Caco-2 (cell line): ENCODE measurements at regions of chr11 and their contacts with region 1.

Region 1: GRCh38 chr11:64652586-64653387 is 61.8 kb downstream of the SLC22A12 start:
- DNase-seq: peak; percentile 86 to 93
- H3K4me3 ChIP-seq: no peak overlapping the region
- H3K4me3 Mint-ChIP-seq: no peak overlapping the region
- H3K27ac Mint-ChIP-seq: no peak overlapping the region
- H3K4me1 ChIP-seq: peaks cover 17% of the 10 kb centered on the region
- H3K4me1 Mint-ChIP-seq: peaks cover 15% of the 10 kb centered on the region
- H3K27me3 ChIP-seq: no peaks in the 10 kb centered on the region
- H3K27me3 Mint-ChIP-seq: no peaks in the 10 kb centered on the region
- CTCF ChIP-seq: peak; percentile 91 to 93

Region 2: GRCh38 chr11:64386306-64386702 is 266.5 kb before region 1 on chr11:
- CTCF ChIA-PET with region 1: interaction called, 13 read pairs
- POLR2A ChIA-PET with region 1: no interaction called
- intact Hi-C with region 1: loop called (anchors 5 kb)
- DNase-seq: peak; percentile 71
- H3K4me3 ChIP-seq: no peak overlapping the region
- H3K4me3 Mint-ChIP-seq: no peak overlapping the region
- H3K27ac Mint-ChIP-seq: peak overlapping the region; percentile 85
- H3K4me1 ChIP-seq: peaks cover 52% of the 10 kb centered on the region
- H3K4me1 Mint-ChIP-seq: peaks cover 41% of the 10 kb centered on the region
- H3K27me3 ChIP-seq: no peaks in the 10 kb centered on the region
- H3K27me3 Mint-ChIP-seq: no peaks in the 10 kb centered on the region
- CTCF ChIP-seq: no peak

Region 3: DNA sequence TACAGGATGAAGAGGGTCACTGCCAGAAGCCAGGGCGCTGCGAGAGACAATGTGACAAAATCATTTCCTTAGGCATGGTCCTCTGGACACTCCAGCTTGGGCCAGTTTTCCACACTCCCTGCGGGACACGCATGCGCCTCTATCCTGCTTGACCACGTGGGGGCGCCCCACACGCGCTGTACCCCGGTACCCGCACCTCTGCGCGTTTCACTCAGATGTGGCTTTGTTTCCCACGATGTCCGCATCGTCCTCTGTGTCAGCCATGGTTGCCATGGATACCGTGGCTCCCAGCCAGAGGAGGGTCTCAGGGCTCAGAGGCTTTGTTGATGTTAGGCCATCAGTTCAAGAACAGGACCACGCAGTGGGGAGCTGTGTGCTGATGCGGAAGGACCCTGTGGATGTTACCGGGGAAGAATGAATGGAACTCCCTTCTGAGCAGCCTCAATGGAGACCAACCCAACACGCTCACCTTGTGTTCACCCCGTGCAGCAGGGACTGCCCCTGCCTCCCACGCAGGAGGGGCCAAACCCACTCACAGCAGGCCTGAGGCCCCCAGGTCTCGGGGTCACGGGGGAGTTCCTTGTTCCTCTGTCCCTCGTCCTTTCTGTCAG is 162.9 kb before region 1 on chr11:
- CTCF ChIA-PET with region 1: interaction called, 7 read pairs
- POLR2A ChIA-PET with region 1: no interaction called
- intact Hi-C with region 1: loop called (anchors 1 kb)
- DNase-seq: peak; percentile 67 to 80
- H3K4me3 ChIP-seq: no peak overlapping the region
- H3K4me3 Mint-ChIP-seq: peak overlapping the region; percentile 62
- H3K27ac Mint-ChIP-seq: no peak overlapping the region
- H3K4me1 ChIP-seq: peaks cover 12% of the 10 kb centered on the region; the same call in 1 of the 2 replicates
- H3K4me1 Mint-ChIP-seq: peaks cover 21% of the 10 kb centered on the region
- H3K27me3 ChIP-seq: no peaks in the 10 kb centered on the region; the same call in 1 of the 2 replicates
- H3K27me3 Mint-ChIP-seq: peaks cover 29% of the 10 kb centered on the region
- CTCF ChIP-seq: peak; percentile 91 to 93

Region 4: DNA sequence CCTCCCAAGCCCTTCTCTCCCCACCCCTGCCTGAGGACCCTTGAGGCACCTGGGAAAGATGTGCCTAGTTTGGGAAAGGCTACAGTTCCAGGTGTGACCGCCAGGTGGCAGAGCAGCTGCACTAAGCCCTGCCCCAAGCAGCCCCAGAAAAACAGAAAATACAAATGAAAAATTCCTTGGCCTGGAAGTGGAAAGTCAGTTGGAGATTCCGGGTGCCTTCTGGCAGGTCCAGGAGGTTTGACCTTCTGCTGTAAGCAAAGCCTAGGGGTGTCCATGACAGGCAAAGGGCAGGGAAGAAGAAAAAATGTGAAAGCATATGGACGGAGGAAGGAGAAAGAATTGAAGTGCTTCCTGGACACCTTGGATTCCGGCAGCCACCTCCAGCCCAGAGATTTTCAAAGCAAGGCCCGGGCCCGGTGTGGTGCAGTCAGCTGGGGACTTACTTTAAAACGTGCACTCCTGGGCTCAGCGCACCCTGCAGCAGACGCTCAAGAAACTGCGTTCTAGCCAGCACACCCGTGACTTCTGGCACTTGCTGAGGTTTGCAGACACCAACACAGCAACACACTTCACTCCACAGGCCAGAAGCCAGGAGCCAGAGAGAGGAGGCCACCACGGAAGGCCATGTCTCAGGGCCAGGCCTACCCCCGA is 99.1 kb before region 1 on chr11:
- CTCF ChIA-PET with region 1: no interaction called
- POLR2A ChIA-PET with region 1: no interaction called
- intact Hi-C with region 1: loop called (anchors 1 kb)
- DNase-seq: peak in 1 of 2 experiments; percentile 74
- H3K4me3 ChIP-seq: no peak overlapping the region
- H3K4me3 Mint-ChIP-seq: peak overlapping the region; percentile 32
- H3K27ac Mint-ChIP-seq: peak overlapping the region; percentile 91
- H3K4me1 ChIP-seq: peaks cover 48% of the 10 kb centered on the region
- H3K4me1 Mint-ChIP-seq: peaks cover 39% of the 10 kb centered on the region
- H3K27me3 ChIP-seq: no peaks in the 10 kb centered on the region
- H3K27me3 Mint-ChIP-seq: peaks cover 4% of the 10 kb centered on the region
- CTCF ChIP-seq: peak; percentile 96 to 97

Region 5: DNA sequence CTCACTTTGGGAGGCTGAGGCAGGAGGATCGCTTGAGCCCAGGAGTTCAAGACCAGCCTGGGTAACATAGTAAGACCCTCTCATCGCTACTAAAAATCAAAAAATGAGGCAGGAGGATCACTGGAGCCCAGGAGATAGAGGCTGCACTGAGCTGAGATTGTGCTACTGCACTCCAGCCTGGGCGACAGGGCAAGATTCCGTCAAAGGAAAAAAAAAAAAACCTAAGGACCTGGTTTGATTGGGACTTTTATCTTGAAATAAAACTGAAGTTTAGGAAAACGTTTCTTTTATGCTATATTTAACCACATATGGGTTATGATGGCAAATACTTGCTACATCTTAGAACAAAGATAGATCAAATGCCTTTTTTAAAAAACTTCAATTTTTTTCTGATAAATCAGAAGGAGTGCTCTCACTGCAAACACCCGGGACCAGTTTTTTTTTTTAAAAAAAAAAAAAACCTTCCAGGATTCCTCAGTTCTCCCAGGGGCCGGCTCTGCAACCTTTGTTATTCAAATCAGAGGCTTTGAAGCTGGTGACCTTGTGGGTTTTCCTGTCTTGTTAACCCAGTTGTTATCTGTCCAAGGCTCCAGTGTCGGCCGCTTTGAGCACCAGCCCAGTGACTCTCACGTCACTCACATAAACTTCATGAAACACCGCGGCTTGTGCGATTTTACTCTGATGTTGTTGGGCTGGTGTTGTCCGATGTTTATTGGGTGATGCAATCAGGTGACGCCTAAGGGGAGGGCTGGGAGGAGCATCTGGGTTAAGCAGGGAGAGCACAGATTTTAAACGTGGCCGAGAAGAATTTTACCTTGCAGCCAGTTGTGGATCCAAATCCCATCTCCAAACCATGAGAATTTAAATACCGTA is 86.5 kb before region 1 on chr11:
- CTCF ChIA-PET with region 1: interaction called, 10 read pairs
- POLR2A ChIA-PET with region 1: interaction called, 6 read pairs
- intact Hi-C with region 1: no loop called
- DNase-seq: peak; percentile 96 to 99
- H3K4me3 ChIP-seq: peak overlapping the region; percentile 13; the same call in 1 of the 2 replicates
- H3K4me3 Mint-ChIP-seq: peak overlapping the region; percentile 69
- H3K27ac Mint-ChIP-seq: peak overlapping the region; percentile 99
- H3K4me1 ChIP-seq: peaks cover 35% of the 10 kb centered on the region
- H3K4me1 Mint-ChIP-seq: peaks cover 15% of the 10 kb centered on the region
- H3K27me3 ChIP-seq: no peaks in the 10 kb centered on the region
- H3K27me3 Mint-ChIP-seq: no peaks in the 10 kb centered on the region
- CTCF ChIP-seq: no peak